Esophagus muscularis mucosa (tissue), 4 donors: ENCODE measurements at regions of chr10 and their contacts with region 1.

Region 1: GRCh38 chr10:113521123-113521795 is 31.6 kb upstream of the HABP2 start:
- DNase-seq: no peak
- H3K4me3 ChIP-seq: no peak overlapping the region
- H3K27ac ChIP-seq: no peak overlapping the region
- H3K4me1 ChIP-seq: peaks cover 4 to 11% (median 11%) of the 10 kb centered on the region in 4 donors
- H3K27me3 ChIP-seq: no peaks in the 10 kb centered on the region
- CTCF ChIP-seq: peak; percentile 96 to 98 (median 97)
- EP300 ChIP-seq: no peak
- POLR2A ChIP-seq: no peak

Region 2: DNA sequence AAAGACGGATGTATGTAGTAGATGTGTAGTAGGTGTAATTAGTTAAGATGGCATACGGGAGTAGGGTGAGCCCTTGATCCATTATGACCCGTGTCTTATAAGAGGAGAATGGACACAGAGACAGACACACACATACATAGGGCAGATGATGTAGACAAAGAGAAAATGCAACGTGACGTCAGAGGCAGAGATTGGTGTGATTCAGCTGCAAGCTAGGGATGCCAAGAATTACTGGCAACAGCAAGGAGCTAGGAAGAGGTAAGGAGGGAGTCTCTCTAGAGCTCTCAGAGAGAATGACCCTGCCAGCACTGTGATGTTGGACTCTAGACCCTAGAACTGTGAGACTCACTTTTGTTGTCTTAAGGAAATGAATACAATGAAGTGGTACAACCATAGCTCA is 215.4 kb before region 1 on chr10:
- intact Hi-C with region 1: no loop called
- DNase-seq: no peak
- H3K4me3 ChIP-seq: no peak overlapping the region
- H3K27ac ChIP-seq: no peak overlapping the region
- H3K4me1 ChIP-seq: no peaks in the 10 kb centered on the region
- H3K27me3 ChIP-seq: no peaks in the 10 kb centered on the region
- CTCF ChIP-seq: no peak
- EP300 ChIP-seq: no peak
- POLR2A ChIP-seq: no peak

Region 3: GRCh38 chr10:113441220-113441619 is 80.0 kb before region 1 on chr10:
- intact Hi-C with region 1: loop called (anchors 5 kb)
- DNase-seq: no peak
- H3K4me3 ChIP-seq: no peak overlapping the region
- H3K27ac ChIP-seq: no peak overlapping the region
- H3K4me1 ChIP-seq: no peaks in the 10 kb centered on the region
- H3K27me3 ChIP-seq: no peaks in the 10 kb centered on the region
- CTCF ChIP-seq: peak in 2 of 3 experiments; percentile 9 to 27
- EP300 ChIP-seq: no peak
- POLR2A ChIP-seq: no peak